Posterior vena cava (tissue), 2 donors: ENCODE measurements at regions of chr14 and their contacts with region 1.

Region 1: DNA sequence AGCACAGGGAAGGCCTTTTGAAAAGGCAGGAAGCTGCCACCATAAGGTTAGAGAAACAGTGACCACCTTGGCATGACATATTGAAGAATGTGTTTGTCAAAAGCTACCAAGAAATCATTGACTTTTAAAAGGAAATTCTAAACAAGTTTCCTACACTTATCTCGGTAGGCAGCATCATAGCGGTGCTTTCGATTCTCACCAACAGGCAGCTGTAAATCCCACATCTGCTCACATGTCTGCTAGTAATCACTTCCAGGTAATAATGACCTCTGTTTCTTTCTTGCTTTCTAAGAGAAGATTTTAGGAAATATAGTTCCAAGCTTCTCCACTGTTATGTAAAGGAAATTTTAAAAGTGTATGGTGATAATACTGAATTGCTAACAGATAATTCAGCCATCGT is 821.1 kb upstream of the FOXG1 start:
- DNase-seq: no peak

Region 2: DNA sequence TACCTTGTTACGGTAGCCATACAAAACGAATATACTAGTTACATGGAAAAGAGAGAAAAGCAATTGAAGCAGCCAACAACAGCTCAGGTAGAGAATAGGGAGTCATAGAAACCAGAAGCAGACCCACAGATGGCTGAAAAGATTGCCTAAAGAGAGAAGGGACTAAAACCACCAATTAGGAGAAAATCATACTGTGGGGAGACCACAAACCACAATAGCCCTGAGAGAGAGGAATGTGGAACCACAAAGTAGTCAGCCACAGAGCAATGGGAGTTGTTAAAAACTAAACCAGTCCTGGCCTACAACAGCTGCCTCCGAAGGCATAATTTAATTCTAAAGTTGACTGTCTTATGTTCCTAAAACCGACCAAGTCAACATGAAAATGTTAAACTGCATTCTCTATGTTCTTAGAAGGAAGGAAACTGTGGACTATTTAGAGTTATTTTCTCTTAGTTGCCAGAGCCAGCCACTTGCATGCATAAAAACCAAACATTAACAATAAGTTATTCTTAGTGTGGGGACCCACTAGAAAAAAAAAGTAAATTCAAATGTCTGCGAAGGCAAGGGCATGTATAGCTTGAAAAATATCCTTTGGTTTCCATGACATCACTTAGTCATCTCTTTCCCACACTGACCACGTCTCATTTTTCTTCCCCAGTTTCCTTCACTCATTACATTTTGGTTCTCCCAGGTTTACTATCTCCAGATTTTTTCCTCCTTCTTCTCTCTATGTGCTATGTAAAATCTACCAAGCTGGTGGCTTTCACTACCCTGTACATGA is 1745.7 kb before region 1 on chr14:
- intact Hi-C with region 1: loop called in 1 of 2 experiments (anchors 5 kb)
- DNase-seq: no peak